ENCODE measurements at regions of chr10 and their contacts with region 1.

Region 1: DNA sequence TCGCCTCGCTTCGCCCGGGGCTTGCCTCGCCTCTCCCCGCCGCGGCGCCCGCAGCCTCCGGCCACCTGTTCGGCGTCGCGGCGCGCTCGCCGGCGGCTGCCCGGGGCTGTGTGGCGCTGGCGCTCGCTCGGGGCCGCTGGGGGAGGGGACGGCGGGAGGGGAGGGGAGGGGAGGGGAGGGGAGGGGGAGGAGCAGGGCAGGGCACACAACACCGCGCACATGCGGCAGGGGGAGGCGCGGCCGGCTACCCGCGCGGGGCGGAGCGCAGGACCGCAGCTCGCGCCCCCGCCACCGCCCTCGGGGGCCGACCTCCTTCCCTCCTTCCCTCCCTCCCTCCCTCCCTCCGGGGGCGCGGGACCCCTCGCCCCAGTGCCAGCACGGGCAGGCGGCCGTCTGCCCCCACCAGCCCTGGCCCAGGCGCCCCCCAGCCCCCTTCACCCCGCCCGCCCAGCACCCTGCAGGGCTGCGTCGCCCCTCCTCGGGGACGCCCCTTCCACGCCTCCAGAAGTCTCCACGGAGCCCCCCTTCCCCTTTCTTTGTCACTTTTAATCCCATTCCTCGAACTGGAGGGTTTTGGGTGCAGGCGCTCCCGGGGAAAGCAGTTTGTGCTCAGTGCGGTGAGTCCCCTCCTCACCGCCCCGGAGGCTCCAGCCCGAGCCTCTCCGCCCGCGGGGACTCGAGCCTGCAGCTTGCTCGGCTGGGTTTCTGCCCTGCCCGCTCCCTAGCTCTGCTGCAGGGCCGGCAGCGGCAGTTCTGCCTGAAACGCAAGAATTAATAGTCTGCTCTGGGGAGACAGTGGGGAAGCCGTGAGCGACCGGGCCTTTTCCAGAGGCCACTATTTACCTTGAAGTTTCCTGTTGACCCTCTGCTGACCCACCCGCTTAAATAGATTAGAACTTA is at the start of gene PARD3:
- DNase-seq: peak; percentile 75 to 88
- ATAC-seq: peak; percentile 80 to 85 (median 84)
- H3K4me3 ChIP-seq: peak within 1 kb of the TSS; percentile 81
- H3K27ac ChIP-seq: peak within 1 kb of the TSS; percentile 80
- H3K4me1 ChIP-seq: peaks cover 35% of the 10 kb centered on the region
- H3K27me3 ChIP-seq: no peaks in the 10 kb centered on the region
- CTCF ChIP-seq: no peak
- total RNA-seq, gene PARD3: 52.7 to 84.4 (median 63.3) TPM

Region 2: DNA sequence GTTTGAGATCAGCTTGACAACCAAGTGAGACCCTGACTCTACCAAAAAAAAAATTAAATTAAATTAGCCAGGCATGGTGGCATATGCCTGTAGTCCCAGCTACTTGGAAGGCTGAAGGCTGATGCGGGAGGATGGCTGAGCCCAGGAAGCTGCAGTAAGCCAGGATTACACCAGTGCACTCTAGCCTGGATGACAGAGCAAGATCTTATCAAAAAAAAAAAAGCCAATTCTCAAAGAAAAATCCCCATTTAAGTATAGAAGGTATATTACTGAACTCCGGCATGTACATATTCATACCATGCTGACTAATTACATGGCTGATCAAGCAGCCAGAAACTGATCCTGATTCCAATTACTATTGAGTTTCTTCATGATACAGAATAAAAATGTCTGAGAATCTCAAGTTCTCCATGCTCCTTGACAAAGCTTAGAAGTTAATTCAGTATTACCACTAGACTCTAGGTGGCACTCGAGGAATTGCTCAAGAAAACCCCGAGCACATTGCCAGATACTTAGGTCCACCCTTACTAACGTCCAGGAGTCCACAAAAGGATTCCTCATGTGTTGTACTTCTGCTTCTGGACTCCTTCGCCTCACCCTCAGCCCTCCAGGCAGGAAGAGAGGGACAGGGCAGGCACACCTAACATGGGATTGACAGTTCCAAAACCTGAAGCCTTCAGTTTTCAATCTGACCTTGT is 149.3 kb before region 1 on chr10:
- intact Hi-C with region 1: loop called in 1 of 2 experiments (anchors 5 kb)
- DNase-seq: no peak
- ATAC-seq: peak; percentile 77 to 92 (median 88)
- H3K4me3 ChIP-seq: no peak overlapping the region
- H3K27ac ChIP-seq: no peak overlapping the region
- H3K4me1 ChIP-seq: peaks cover 36% of the 10 kb centered on the region
- H3K27me3 ChIP-seq: no peaks in the 10 kb centered on the region
- CTCF ChIP-seq: peak; percentile 69

Region 3: GRCh38 chr10:34723750-34724149 is 91.7 kb before region 1 on chr10:
- intact Hi-C with region 1: loop called in 1 of 2 experiments (anchors 2 kb)
- DNase-seq: no peak
- ATAC-seq: peak; percentile 51 to 76 (median 75)
- H3K4me3 ChIP-seq: no peak overlapping the region
- H3K27ac ChIP-seq: peak overlapping the region; percentile 37
- H3K4me1 ChIP-seq: peaks cover 40% of the 10 kb centered on the region
- H3K27me3 ChIP-seq: no peaks in the 10 kb centered on the region
- CTCF ChIP-seq: peak; percentile 46

Region 4: GRCh38 chr10:34739915-34740314 is 75.5 kb before region 1 on chr10:
- intact Hi-C with region 1: loop called in 1 of 2 experiments (anchors 5 kb)
- DNase-seq: peak; percentile 43 to 79
- ATAC-seq: peak; percentile 83 to 87 (median 86)
- H3K4me3 ChIP-seq: peak overlapping the region; percentile 35
- H3K27ac ChIP-seq: peak overlapping the region; percentile 80
- H3K4me1 ChIP-seq: peaks cover 44% of the 10 kb centered on the region
- H3K27me3 ChIP-seq: no peaks in the 10 kb centered on the region
- CTCF ChIP-seq: no peak

Region 5: DNA sequence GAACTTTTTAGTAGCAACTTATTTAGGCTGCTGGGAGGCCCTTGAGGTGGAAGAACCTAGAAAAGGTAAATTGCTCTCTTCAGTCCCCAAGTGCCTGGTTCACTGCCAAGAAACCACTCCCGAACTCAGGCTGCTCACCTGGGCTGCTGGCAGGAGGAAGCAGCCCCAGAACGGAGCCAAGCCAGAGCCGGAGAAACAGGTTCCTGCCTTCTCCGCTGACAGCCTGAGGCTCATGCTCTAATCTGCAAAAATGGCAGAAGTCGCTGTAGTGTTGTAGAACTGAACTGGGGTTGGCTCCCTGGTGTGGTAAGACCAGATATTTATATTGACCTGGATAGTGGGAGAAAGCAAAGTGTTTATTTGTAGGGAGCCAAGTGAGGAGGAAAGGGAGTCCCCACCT is 138.7 kb after region 1 on chr10:
- intact Hi-C with region 1: loop called in 1 of 2 experiments (anchors 10 kb)
- DNase-seq: no peak
- ATAC-seq: no peak
- H3K4me3 ChIP-seq: no peak overlapping the region
- H3K27ac ChIP-seq: no peak overlapping the region
- H3K4me1 ChIP-seq: peaks cover 4% of the 10 kb centered on the region
- H3K27me3 ChIP-seq: no peaks in the 10 kb centered on the region
- CTCF ChIP-seq: no peak